AG04449 (cell line): ENCODE measurements at regions of chr3 and their contacts with region 1.

Region 1: DNA sequence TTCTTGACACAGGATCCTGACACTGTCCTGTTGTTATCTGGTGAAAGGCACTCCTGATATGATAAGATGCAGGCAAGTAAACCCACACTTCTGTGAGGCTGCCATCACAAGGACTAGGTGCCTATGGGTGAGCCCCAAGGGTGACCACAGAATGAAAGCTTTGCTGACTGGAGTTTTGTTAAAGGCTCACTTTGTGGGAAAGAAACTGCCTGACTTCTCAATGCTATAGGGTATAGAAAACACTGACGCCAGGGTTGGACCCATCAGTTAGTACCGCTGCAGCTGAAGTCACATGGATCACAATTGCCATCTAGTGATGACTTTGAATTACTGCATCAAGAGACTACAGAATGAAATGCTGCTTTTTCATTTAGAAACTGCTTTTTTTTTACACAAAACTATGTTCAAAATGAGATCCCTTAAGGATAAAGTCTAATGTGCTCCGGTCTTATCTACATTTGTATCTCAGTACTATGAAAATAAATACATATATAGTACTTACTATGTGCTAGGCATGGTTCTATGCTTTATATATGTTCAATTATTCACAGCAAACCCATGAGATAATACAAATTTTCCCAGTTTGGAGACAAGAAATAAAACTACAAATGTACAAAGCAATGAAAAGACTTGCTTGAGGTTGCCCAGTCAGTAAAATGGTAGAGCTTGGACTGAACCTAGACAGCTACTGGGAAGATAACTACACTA is 64.2 kb upstream of the CMSS1 start:
- DNase-seq: no peak
- H3K4me3 ChIP-seq: no peak overlapping the region
- CTCF ChIP-seq: peak; percentile 64

Region 2: GRCh38 chr3:99023590-99024192 is 729.7 kb before region 1 on chr3:
- CTCF ChIA-PET with region 1: interaction called, 17 read pairs
- POLR2A ChIA-PET with region 1: no interaction called
- DNase-seq: no peak
- H3K4me3 ChIP-seq: no peak overlapping the region
- CTCF ChIP-seq: peak; percentile 52

Region 3: GRCh38 chr3:99866261-99866761 is 112.9 kb after region 1 on chr3:
- CTCF ChIA-PET with region 1: no interaction called
- POLR2A ChIA-PET with region 1: no interaction called
- DNase-seq: no peak
- H3K4me3 ChIP-seq: no peak overlapping the region
- CTCF ChIP-seq: no peak

Region 4: DNA sequence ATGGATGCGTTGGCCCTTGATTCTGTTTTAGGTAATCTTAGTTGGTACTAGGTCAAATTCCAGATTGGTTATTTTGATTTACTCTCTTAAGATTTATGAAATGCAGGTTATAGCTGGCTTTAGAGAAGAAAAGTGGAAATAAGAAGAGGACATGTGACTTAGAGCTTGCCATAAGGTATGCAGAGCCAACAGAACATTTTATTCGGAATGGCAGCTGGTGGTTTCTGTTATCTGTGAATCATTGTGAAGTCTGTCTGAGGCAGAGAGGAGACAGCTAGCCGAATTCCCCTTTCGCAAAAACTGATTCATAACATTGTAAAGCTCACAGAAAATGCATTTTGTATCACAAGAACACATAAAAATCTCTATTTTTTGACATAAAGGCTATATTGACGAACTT is 278.8 kb after region 1 on chr3:
- CTCF ChIA-PET with region 1: no interaction called
- POLR2A ChIA-PET with region 1: no interaction called
- DNase-seq: peak; percentile 63
- H3K4me3 ChIP-seq: no peak overlapping the region
- CTCF ChIP-seq: no peak